H1 (cell line): ENCODE measurements at regions of chr9 and their contacts with region 1.

Region 1: GRCh38 chr9:36436909-36437308 is 36.8 kb upstream of the RNF38 start:
- DNase-seq: no peak
- H3K4me3 ChIP-seq: no peak overlapping the region
- H3K27ac ChIP-seq: no peak overlapping the region
- H3K4me1 ChIP-seq: peaks cover 1 to 6% (median 4%) of the 10 kb centered on the region in 4 experiments; a peak in 3 of 7 replicates
- H3K27me3 ChIP-seq: no peaks in the 10 kb centered on the region
- CTCF ChIP-seq: no peak
- EP300 ChIP-seq: no peak
- POLR2A ChIP-seq: no peak
- RAD21 ChIP-seq: no peak

Region 2: DNA sequence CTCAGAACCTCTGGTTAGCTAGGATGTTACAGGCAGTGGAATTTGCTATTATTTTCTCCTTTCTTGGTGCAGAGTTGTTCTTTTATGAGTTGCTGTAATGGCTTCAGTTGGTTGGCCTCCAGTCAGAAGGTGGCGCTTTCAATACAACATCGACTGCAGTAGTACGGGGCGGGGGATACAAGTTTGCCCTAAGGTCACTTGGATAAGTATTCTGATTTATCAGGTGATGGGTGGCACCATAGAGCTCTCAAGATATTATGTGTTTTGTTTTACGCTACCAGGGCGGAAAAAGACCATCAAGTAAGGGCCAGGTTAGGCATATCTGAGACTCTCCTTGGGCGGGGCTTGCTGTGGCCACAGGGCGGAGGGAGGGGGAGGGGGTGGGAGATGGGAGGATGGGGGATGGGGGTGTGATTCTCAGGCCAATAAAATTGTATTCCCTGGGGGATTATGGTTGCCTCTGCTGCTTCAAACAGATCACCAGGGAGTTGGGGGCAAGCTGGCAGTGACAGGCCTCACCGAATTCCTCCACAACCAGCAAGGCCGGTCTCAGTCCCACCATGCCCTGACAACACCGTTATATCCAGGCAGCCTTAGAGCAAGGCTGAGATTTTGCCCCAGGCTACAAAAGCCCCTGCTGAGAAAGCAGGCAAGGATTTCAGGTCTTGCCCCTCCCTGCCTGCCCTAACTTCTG is 20.9 kb before region 1 on chr9:
- CTCF ChIA-PET with region 1: interaction called, 14 read pairs
- POLR2A ChIA-PET with region 1: interaction called, 3 read pairs
- DNase-seq: peak; percentile 27 to 59
- H3K4me3 ChIP-seq: peak overlapping the region in 1 of 4 experiments; percentile 23; a peak in 1 of 8 replicates
- H3K27ac ChIP-seq: no peak overlapping the region
- H3K4me1 ChIP-seq: peaks cover 0 to 9% (median 4%) of the 10 kb centered on the region in 4 experiments; a peak in 3 of 7 replicates
- H3K27me3 ChIP-seq: no peaks in the 10 kb centered on the region
- CTCF ChIP-seq: peak; percentile 12 to 42 (median 37); a peak in 3 of 4 replicates
- EP300 ChIP-seq: no peak
- POLR2A ChIP-seq: peak in 1 of 2 experiments; percentile 39; a peak in 1 of 3 replicates
- RAD21 ChIP-seq: peak; percentile 25 to 36; a peak in 3 of 4 replicates

Region 3: GRCh38 chr9:36632892-36633291 is 196.0 kb after region 1 on chr9:
- CTCF ChIA-PET with region 1: no interaction called
- POLR2A ChIA-PET with region 1: no interaction called
- DNase-seq: no peak
- H3K4me3 ChIP-seq: no peak overlapping the region
- H3K27ac ChIP-seq: no peak overlapping the region
- H3K4me1 ChIP-seq: no peaks in the 10 kb centered on the region
- H3K27me3 ChIP-seq: no peaks in the 10 kb centered on the region
- CTCF ChIP-seq: peak in 2 of 3 experiments; percentile 26 to 27; a peak in 2 of 4 replicates
- EP300 ChIP-seq: no peak
- POLR2A ChIP-seq: no peak
- RAD21 ChIP-seq: peak in 1 of 2 experiments; percentile 9; a peak in 2 of 4 replicates